MCF 10A (cell line): ENCODE measurements at regions of chr6 and their contacts with region 1.

Region 1: DNA sequence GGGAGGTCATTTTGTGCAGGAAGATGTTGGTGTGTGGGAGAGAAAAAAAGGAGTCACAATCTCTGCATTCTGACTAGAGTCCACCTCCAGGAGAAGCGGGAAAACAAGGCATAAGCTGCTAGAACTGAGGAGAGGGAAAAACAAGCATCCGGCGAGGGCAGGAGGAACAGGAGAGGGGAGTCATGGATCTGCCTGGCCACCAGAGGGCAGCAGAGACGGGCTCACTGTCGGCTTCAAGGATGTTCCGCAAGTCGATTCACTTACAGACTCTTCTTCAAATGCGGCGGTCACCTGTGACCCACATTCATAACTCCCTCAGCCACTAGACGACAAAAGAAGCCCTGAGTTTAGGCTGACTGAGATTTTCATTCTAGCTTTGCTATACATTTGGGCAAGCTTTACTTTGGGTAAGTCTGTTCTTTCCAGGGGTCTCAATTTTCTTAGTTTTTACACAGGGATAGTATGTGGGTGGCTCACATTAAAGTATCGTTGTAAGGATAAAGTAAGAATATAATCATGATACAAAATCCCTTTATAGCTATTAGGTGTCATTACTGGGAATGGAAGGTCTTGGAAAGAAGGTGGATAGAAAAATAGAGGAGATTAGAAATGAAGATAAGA is 6.6 kb upstream of the BTNL2 start:
- DNase-seq: peak; percentile 67
- H3K4me3 Mint-ChIP-seq: no peak overlapping the region
- H3K27ac Mint-ChIP-seq: no peak overlapping the region
- H3K4me1 Mint-ChIP-seq: no peaks in the 10 kb centered on the region
- H3K27me3 Mint-ChIP-seq: peaks cover 80% of the 10 kb centered on the region
- CTCF ChIP-seq: peak; percentile 91

Region 2: DNA sequence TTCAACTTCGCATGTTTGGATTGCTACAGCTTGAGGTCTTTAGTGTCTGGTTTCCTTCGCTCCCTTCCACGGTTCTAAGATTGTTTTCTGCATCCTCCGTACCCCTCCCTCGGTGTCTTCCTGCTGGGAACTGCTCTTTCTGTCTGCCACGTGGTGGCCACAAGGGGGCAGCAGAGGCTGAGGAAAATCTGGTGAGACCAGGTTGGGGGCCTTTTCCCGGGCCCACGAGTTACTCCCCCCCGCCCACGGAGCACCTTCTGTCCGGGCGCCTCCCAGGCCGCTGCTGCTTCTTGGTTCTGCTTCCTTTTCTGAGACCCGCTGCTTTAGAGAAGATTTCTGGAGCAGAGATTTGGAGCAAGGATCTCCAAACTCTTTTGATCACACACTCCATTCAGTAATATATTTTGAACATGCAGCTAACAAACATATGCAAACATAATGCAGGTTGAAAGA is 168.6 kb before region 1 on chr6:
- CTCF ChIA-PET with region 1: interaction called, 24 read pairs
- POLR2A ChIA-PET with region 1: no interaction called
- intact Hi-C with region 1: loop called (anchors 1 kb)
- DNase-seq: peak; percentile 74
- H3K4me3 Mint-ChIP-seq: peak overlapping the region; percentile 68
- H3K27ac Mint-ChIP-seq: peak overlapping the region; percentile 71
- H3K4me1 Mint-ChIP-seq: peaks cover 9% of the 10 kb centered on the region
- H3K27me3 Mint-ChIP-seq: peaks cover 12% of the 10 kb centered on the region
- CTCF ChIP-seq: peak; percentile 89

Region 3: GRCh38 chr6:32402812-32403211 is 10.7 kb before region 1 on chr6:
- CTCF ChIA-PET with region 1: interaction called, 15 read pairs
- POLR2A ChIA-PET with region 1: no interaction called
- intact Hi-C with region 1: no loop called
- DNase-seq: no peak
- H3K4me3 Mint-ChIP-seq: no peak overlapping the region
- H3K27ac Mint-ChIP-seq: no peak overlapping the region
- H3K4me1 Mint-ChIP-seq: no peaks in the 10 kb centered on the region
- H3K27me3 Mint-ChIP-seq: peaks cover 97% of the 10 kb centered on the region
- CTCF ChIP-seq: no peak

Region 4: GRCh38 chr6:32432050-32432450 is 18.5 kb after region 1 on chr6:
- CTCF ChIA-PET with region 1: interaction called, 50 read pairs
- POLR2A ChIA-PET with region 1: no interaction called
- intact Hi-C with region 1: no loop called
- DNase-seq: peak; percentile 35
- H3K4me3 Mint-ChIP-seq: no peak overlapping the region
- H3K27ac Mint-ChIP-seq: no peak overlapping the region
- H3K4me1 Mint-ChIP-seq: no peaks in the 10 kb centered on the region
- H3K27me3 Mint-ChIP-seq: peaks cover 60% of the 10 kb centered on the region
- CTCF ChIP-seq: peak; percentile 35

Region 5: DNA sequence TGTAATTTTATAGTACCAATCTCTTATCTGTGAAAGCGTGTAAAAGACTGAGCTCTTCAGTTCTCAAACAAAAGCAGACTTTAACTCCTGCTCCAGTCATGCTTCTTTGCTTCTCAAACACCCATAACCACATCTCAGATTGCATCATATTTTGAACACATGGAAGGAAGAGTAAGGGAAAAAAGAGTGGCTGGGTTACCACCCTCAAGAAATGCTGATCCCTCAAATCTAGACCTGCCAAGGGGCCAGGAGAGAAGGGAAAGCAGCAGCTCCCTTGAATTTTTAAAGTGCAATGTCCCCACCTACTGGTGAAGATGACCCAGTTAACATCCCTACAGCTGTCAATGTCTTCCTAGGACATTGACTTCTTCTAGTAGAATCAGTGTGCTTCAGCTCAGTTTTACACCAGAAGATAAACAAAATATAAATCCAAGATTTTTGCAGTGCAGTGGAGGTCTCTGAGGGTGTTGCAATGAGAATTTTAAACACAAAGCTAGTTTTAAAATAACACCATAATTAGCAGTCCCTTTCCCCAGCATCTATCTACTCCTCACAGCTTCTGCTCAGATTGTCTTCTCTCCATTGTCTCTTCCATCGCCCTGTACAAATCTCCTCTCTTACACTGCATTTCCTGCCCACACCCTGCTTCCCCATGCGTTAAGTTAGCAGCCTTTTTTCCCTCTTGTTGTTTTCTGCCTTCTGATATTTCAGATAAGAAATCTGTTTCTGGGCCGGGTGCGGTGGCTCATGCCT is 372.4 kb after region 1 on chr6:
- CTCF ChIA-PET with region 1: interaction called, 31 read pairs
- POLR2A ChIA-PET with region 1: no interaction called
- intact Hi-C with region 1: loop called (anchors 1 kb)
- DNase-seq: peak; percentile 65
- H3K4me3 Mint-ChIP-seq: no peak overlapping the region
- H3K27ac Mint-ChIP-seq: no peak overlapping the region
- H3K4me1 Mint-ChIP-seq: no peaks in the 10 kb centered on the region
- H3K27me3 Mint-ChIP-seq: peaks cover 95% of the 10 kb centered on the region
- CTCF ChIP-seq: peak; percentile 64

Region 6: DNA sequence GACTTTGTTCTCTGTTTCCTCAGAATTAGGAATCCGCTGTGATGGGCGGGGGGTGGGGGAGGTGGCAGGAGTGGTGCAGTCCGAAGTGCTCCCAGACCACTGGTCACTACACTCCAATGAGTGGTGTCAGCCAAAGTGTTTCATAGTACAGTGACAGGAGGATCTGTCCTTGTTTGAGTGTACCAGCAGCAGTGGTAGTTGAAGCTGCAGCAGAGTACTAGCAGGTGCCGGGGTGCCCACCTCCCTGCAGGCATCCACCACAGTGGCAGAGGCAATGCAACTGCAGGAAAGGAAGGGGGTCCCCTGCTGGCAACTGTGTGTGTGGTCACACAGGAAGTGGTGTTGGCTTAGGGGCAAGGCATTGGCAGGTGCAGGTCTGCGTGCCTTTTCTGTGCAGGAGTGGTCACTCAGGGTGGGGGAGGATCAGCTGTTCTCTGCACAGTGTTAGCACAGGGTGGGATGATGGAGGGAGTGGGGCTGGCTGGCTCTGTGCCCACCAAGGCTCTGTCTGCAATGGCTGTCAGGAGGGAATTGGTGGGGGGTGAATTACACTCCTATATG is 393.6 kb after region 1 on chr6:
- CTCF ChIA-PET with region 1: no interaction called
- POLR2A ChIA-PET with region 1: no interaction called
- intact Hi-C with region 1: no loop called
- DNase-seq: no peak
- H3K4me3 Mint-ChIP-seq: no peak overlapping the region
- H3K27ac Mint-ChIP-seq: no peak overlapping the region
- H3K4me1 Mint-ChIP-seq: no peaks in the 10 kb centered on the region
- H3K27me3 Mint-ChIP-seq: peaks cover 48% of the 10 kb centered on the region
- CTCF ChIP-seq: no peak

Region 7: DNA sequence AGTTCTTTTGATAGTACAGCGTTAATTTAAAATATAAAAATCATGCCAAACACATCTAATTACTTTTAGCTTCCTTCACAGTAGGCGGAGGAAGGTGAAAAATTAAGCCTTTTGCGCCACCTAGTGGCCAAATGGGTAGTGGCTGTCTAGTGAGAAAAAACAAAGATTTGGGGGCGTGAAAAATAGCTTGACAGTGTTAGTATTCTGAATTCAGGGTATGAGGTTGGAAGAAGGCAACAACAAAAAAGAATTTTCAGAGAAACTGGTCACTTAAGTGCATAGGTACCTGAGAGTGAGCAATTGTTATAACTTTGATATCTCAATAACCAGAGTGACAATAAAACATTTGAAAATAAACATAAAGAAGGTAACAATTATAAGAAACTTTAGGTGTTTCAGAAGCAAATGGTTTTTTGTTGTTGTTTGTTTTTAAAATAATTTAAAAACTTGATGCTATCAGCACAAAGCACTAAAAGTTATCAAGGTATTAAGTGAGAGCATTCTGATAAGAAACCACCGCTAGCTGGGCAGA is 454.8 kb after region 1 on chr6:
- CTCF ChIA-PET with region 1: interaction called, 6 read pairs
- POLR2A ChIA-PET with region 1: no interaction called
- intact Hi-C with region 1: loop called (anchors 1 kb)
- DNase-seq: peak; percentile 79
- H3K4me3 Mint-ChIP-seq: no peak overlapping the region
- H3K27ac Mint-ChIP-seq: no peak overlapping the region
- H3K4me1 Mint-ChIP-seq: no peaks in the 10 kb centered on the region
- H3K27me3 Mint-ChIP-seq: peaks cover 43% of the 10 kb centered on the region
- CTCF ChIP-seq: peak; percentile 82

Region 8: GRCh38 chr6:33112148-33112547 is 698.6 kb after region 1 on chr6:
- CTCF ChIA-PET with region 1: no interaction called
- POLR2A ChIA-PET with region 1: no interaction called
- intact Hi-C with region 1: no loop called
- DNase-seq: peak; percentile 65
- H3K4me3 Mint-ChIP-seq: no peak overlapping the region
- H3K27ac Mint-ChIP-seq: no peak overlapping the region
- H3K4me1 Mint-ChIP-seq: no peaks in the 10 kb centered on the region
- H3K27me3 Mint-ChIP-seq: peaks cover 97% of the 10 kb centered on the region
- CTCF ChIP-seq: no peak